ENCODE measurements at regions of chr16 and their contacts with region 1.

Region 1: GRCh38 chr16:84194470-84195200 is 3.7 kb downstream of the ADAD2 start:
- DNase-seq: no peak
- ATAC-seq: no peak
- H3K4me3 ChIP-seq: no peak overlapping the region
- H3K27ac ChIP-seq: no peak overlapping the region
- H3K4me1 ChIP-seq: no peaks in the 10 kb centered on the region
- H3K27me3 ChIP-seq: peaks cover 25 to 69% of the 10 kb centered on the region in 2 experiments; a peak in 4 of 5 replicates
- CTCF ChIP-seq: no peak
- EP300 ChIP-seq: no peak
- POLR2A ChIP-seq: no peak
- RAD21 ChIP-seq: no peak

Region 2: GRCh38 chr16:83661656-83662055 is 533.0 kb before region 1 on chr16:
- CTCF ChIA-PET with region 1: no interaction called
- POLR2A ChIA-PET with region 1: no interaction called
- in situ Hi-C with region 1: no loop called
- intact Hi-C with region 1: loop called (anchors 5 kb)
- DNase-seq: no peak
- ATAC-seq: no peak
- H3K4me3 ChIP-seq: no peak overlapping the region
- H3K27ac ChIP-seq: no peak overlapping the region
- H3K4me1 ChIP-seq: no peaks in the 10 kb centered on the region
- H3K27me3 ChIP-seq: no peaks in the 10 kb centered on the region
- CTCF ChIP-seq: no peak
- EP300 ChIP-seq: no peak
- POLR2A ChIP-seq: no peak
- RAD21 ChIP-seq: no peak